Left lung (tissue), 14 donors: ENCODE measurements at regions of chr1 and their contacts with region 1.

Region 1: DNA sequence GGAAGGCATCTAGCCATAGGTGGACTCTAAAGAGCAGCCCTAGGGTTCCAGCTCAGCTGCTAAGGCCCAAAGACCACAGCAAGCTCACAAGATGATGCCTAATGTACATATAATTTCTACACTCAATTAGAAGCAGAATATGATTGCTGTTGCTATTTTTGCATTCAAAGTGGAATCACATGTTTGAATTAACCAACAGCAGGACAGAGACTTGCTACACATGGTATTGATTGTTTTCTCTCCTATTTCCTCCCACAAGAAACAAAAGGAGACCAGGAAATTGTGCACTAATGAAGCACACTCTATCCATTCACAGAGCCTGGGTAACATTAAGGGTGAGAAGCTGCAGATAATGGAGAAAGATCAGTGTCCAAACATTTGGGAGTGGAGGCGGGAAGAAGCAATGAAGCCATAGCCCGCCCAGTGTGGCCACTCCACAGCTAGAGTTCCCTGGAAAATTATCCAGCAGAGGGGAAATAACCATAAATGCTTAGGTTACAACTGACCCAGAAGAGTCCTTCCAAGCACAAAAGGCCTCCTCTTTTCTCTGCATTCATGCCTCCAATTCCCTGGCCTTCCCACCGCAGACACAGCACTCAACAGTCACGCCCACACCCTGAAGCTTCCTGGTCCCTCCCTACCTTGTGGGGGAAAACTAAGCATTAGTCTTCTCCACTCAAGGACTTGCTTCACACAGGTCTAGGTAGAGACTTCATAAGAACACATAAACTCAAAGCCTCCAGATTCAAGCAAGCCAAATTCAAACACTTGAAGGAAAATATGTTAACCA is 7.5 kb downstream of the CNN3 start:
- DNase-seq: no peak
- ATAC-seq: peak; percentile 82
- H3K4me3 ChIP-seq: no peak overlapping the region
- H3K27ac ChIP-seq: peak overlapping the region; percentile 30 to 36
- H3K4me1 ChIP-seq: peaks cover 44 to 60% of the 10 kb centered on the region in 2 donors
- H3K27me3 ChIP-seq: peaks cover 0 to 8% of the 10 kb centered on the region in 2 donors
- CTCF ChIP-seq: no peak

Region 2: GRCh38 chr1:95002540-95003432 is 83.3 kb after region 1 on chr1:
- intact Hi-C with region 1: no loop called
- DNase-seq: peak in 2 of 4 donors; percentile 58 to 82
- ATAC-seq: peak; percentile 79
- H3K4me3 ChIP-seq: no peak overlapping the region
- H3K27ac ChIP-seq: peak overlapping the region; percentile 23 to 73
- H3K4me1 ChIP-seq: peaks cover 5 to 10% of the 10 kb centered on the region in 2 donors
- H3K27me3 ChIP-seq: no peaks in the 10 kb centered on the region
- CTCF ChIP-seq: no peak

Region 3: DNA sequence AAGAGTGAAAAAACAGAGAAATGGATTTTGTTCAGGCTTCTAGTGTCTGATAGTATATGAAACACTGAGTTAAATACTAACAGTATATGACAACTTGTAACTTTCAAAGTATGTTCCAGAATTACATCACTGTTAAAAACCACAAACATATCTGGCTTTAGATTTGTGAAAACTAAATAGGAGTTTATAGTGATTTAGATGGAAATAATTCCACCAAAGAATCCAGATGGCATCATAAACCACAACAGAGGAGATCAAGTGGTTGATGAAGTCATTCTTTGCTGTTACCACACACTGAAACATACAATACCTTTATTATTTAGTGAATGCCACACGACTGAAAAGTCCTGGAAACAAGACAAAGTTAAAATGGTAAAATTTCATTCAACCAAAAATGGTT is 116.1 kb after region 1 on chr1:
- intact Hi-C with region 1: loop called in 1 of 2 experiments (anchors 10 kb)
- DNase-seq: no peak
- ATAC-seq: no peak
- H3K4me3 ChIP-seq: no peak overlapping the region
- H3K27ac ChIP-seq: no peak overlapping the region
- H3K4me1 ChIP-seq: peaks cover 0 to 2% of the 10 kb centered on the region in 2 donors
- H3K27me3 ChIP-seq: no peaks in the 10 kb centered on the region
- CTCF ChIP-seq: no peak

Region 4: GRCh38 chr1:95154096-95154495 is 234.7 kb after region 1 on chr1:
- intact Hi-C with region 1: no loop called
- DNase-seq: no peak
- ATAC-seq: no peak
- H3K4me3 ChIP-seq: no peak overlapping the region
- H3K27ac ChIP-seq: no peak overlapping the region
- H3K4me1 ChIP-seq: no peaks in the 10 kb centered on the region
- H3K27me3 ChIP-seq: no peaks in the 10 kb centered on the region
- CTCF ChIP-seq: no peak